Calu3 (cell line): ENCODE measurements at regions of chr1 and their contacts with region 1.

Region 1: GRCh38 chr1:228734881-228735801 is at the start of gene RHOU:
- DNase-seq: peak; percentile 90
- H3K4me3 Mint-ChIP-seq: peak within 1 kb of the TSS; percentile 75
- H3K27ac Mint-ChIP-seq: peak within 1 kb of the TSS; percentile 51
- H3K4me1 Mint-ChIP-seq: peaks cover 8% of the 10 kb centered on the region
- H3K27me3 Mint-ChIP-seq: no peaks in the 10 kb centered on the region
- CTCF ChIP-seq: peak; percentile 92
- total RNA-seq, gene RHOU: 6.5 and 8.2 TPM in 2 replicates

Region 2: GRCh38 chr1:228464487-228464983 is 270.6 kb before region 1 on chr1:
- CTCF ChIA-PET with region 1: interaction called, 13 read pairs
- intact Hi-C with region 1: no loop called
- DNase-seq: peak; percentile 44
- H3K4me3 Mint-ChIP-seq: peak overlapping the region; percentile 52
- H3K27ac Mint-ChIP-seq: no peak overlapping the region
- H3K4me1 Mint-ChIP-seq: peaks cover 16% of the 10 kb centered on the region
- H3K27me3 Mint-ChIP-seq: peaks cover 91% of the 10 kb centered on the region
- CTCF ChIP-seq: no peak

Region 3: GRCh38 chr1:228555074-228555989 is 179.8 kb before region 1 on chr1:
- CTCF ChIA-PET with region 1: no interaction called
- intact Hi-C with region 1: no loop called
- DNase-seq: no peak
- H3K4me3 Mint-ChIP-seq: no peak overlapping the region
- H3K27ac Mint-ChIP-seq: no peak overlapping the region
- H3K4me1 Mint-ChIP-seq: no peaks in the 10 kb centered on the region
- H3K27me3 Mint-ChIP-seq: peaks cover 35% of the 10 kb centered on the region
- CTCF ChIP-seq: no peak

Region 4: GRCh38 chr1:228664399-228664914 is 70.7 kb before region 1 on chr1:
- CTCF ChIA-PET with region 1: no interaction called
- intact Hi-C with region 1: loop called (anchors 2 kb)
- DNase-seq: peak; percentile 88
- H3K4me3 Mint-ChIP-seq: peak overlapping the region; percentile 23
- H3K27ac Mint-ChIP-seq: no peak overlapping the region
- H3K4me1 Mint-ChIP-seq: peaks cover 40% of the 10 kb centered on the region
- H3K27me3 Mint-ChIP-seq: no peaks in the 10 kb centered on the region
- CTCF ChIP-seq: peak; percentile 79

Region 5: GRCh38 chr1:228837817-228838716 is 102.9 kb after region 1 on chr1:
- CTCF ChIA-PET with region 1: interaction called, 17 read pairs
- intact Hi-C with region 1: loop called (anchors 5 kb)
- DNase-seq: peak; percentile 87
- H3K4me3 Mint-ChIP-seq: peak overlapping the region; percentile 63
- H3K27ac Mint-ChIP-seq: peak overlapping the region; percentile 92
- H3K4me1 Mint-ChIP-seq: peaks cover 72% of the 10 kb centered on the region
- H3K27me3 Mint-ChIP-seq: no peaks in the 10 kb centered on the region
- CTCF ChIP-seq: no peak

Region 6: DNA sequence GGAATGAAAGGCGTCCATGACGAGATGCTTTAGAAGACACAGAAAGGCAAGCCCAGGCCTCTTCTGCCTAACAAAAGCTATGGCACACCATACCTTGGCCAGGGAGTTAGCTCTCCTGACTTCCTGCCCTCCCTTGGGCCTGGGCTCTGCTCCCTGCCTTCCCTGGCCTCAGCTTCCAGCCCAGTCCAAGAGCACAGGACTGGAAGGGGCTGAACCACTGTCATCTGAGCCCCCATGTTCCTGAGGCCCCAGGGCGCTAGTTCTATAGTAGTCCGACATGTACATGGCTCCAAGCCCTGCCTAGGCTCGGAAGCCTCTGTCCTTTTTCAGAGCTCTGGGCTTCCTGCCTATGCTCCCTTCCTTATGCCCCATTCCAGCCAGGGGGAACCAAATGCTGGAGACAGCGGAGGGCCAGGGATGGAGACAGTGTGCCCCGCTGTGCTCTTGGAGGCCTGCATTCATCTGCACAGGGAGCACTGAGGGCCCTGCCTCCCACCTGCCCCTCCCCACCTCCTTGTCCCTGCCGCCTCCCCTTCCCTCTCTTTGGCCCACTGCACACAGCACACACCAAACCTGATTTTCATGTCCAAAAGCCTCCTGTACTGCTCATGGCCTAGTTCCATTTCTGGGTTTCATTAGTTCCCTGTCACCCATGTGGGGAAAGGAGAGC is 240.2 kb after region 1 on chr1:
- CTCF ChIA-PET with region 1: interaction called, 12 read pairs
- intact Hi-C with region 1: no loop called
- DNase-seq: no peak
- H3K4me3 Mint-ChIP-seq: no peak overlapping the region
- H3K27ac Mint-ChIP-seq: no peak overlapping the region
- H3K4me1 Mint-ChIP-seq: no peaks in the 10 kb centered on the region
- H3K27me3 Mint-ChIP-seq: peaks cover 15% of the 10 kb centered on the region
- CTCF ChIP-seq: no peak

Region 7: DNA sequence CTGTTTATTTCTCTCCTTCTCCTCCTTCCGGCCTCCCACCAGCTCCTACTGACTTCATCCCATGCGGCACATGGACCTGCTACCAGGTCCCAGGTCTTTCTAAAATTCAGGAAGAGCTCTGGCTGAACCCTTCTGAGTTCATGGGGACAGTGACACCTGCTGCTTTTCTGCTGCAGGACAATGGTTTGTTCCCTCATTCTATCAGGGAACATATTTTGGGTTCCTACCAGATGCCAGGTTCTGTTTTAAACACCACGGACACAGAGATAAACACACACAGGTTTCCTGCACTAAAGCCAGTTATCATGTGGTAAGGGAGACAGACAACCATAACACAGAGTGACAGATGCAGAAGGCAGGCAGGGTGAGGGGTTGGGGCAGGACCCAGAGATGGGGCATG is 421.7 kb after region 1 on chr1:
- CTCF ChIA-PET with region 1: interaction called, 6 read pairs
- intact Hi-C with region 1: loop called (anchors 2 kb)
- DNase-seq: peak; percentile 38
- H3K4me3 Mint-ChIP-seq: no peak overlapping the region
- H3K27ac Mint-ChIP-seq: no peak overlapping the region
- H3K4me1 Mint-ChIP-seq: peaks cover 8% of the 10 kb centered on the region
- H3K27me3 Mint-ChIP-seq: no peaks in the 10 kb centered on the region
- CTCF ChIP-seq: peak; percentile 37

Region 8: DNA sequence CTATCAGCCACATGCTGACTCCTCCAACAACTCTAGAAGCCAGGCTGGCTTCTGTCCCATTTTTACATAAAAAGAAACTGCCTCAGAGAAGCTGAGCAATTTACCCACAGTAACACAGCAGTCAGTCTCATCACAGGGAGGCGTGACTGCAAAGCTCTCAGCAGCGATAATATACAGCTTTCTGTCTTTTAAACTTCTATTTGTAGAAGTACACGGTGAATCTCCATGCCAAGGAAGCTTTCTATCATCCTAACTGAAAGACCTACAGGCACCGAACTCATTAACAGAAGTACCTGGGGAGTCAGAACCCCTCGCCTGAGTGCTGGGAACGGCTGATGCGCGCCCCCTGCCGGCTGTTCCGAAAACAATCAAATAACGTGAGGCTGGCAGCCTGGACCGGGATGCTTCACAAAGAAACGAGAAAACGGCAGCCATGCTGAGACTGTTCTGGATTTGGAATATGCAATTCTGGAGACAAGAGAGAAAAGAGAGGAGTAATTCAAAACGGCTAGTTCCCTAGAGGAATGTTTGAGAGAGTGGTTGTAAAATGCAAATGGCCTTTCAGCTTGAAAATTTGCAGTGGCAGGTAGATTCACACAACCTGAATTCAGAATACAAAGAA is 492.3 kb after region 1 on chr1:
- CTCF ChIA-PET with region 1: interaction called, 8 read pairs
- intact Hi-C with region 1: loop called (anchors 2 kb)
- DNase-seq: peak; percentile 92
- H3K4me3 Mint-ChIP-seq: no peak overlapping the region
- H3K27ac Mint-ChIP-seq: peak overlapping the region; percentile 33
- H3K4me1 Mint-ChIP-seq: peaks cover 69% of the 10 kb centered on the region
- H3K27me3 Mint-ChIP-seq: no peaks in the 10 kb centered on the region
- CTCF ChIP-seq: peak; percentile 92